ENCODE measurements at regions of chr9 and their contacts with region 1.

Region 1: GRCh38 chr9:79279356-79279755 is 292.4 kb upstream of the TLE4 start:
- DNase-seq: no peak
- H3K4me3 Mint-ChIP-seq: no peak overlapping the region
- H3K27ac Mint-ChIP-seq: no peak overlapping the region
- H3K4me1 Mint-ChIP-seq: no peaks in the 10 kb centered on the region
- H3K27me3 Mint-ChIP-seq: peaks cover under 1% of the 10 kb centered on the region

Region 2: DNA sequence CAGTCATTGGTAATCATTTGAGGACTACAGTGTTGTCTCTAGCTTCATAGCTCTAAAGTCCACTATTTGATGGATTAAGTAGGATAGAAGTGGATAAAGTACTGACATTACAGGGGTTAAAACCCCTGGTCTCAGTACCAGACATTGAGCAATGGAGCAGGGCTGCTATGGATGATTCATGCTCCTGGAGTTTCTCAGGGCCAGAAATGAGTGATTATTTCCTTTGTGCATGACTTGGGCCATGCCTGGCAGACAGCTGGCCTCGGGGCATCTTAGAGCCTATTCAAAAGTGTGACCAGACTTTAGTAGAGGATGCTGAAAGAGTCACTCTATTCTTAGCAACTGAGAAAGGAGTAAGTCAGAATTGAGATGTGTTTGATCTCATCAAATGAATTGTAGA is 58.3 kb before region 1 on chr9:
- intact Hi-C with region 1: no loop called
- DNase-seq: no peak
- H3K4me3 Mint-ChIP-seq: no peak overlapping the region
- H3K27ac Mint-ChIP-seq: no peak overlapping the region
- H3K4me1 Mint-ChIP-seq: no peaks in the 10 kb centered on the region
- H3K27me3 Mint-ChIP-seq: peaks cover 2% of the 10 kb centered on the region

Region 3: GRCh38 chr9:81002242-81002641 is 1722.9 kb after region 1 on chr9:
- intact Hi-C with region 1: loop called (anchors 5 kb)
- DNase-seq: peak; percentile 38
- H3K4me3 Mint-ChIP-seq: no peak overlapping the region
- H3K27ac Mint-ChIP-seq: peak overlapping the region; percentile 1
- H3K4me1 Mint-ChIP-seq: peaks cover 8% of the 10 kb centered on the region
- H3K27me3 Mint-ChIP-seq: no peaks in the 10 kb centered on the region